Heart left ventricle (tissue), 16 donors: ENCODE measurements at regions of chr14 and their contacts with region 1.

Region 1: GRCh38 chr14:63276492-63277342 is 42.0 kb downstream of the GPHB5 start:
- DNase-seq: no peak
- ATAC-seq: peak in 1 of 4 donors; percentile 32
- H3K4me3 ChIP-seq: no peak overlapping the region
- H3K27ac ChIP-seq: peak overlapping the region in 1 of 12 donors; percentile 17
- H3K4me1 ChIP-seq: peaks cover 0 to 36% (median 7%) of the 10 kb centered on the region in 12 donors
- H3K27me3 ChIP-seq: no peaks in the 10 kb centered on the region
- CTCF ChIP-seq: peak; percentile 57 to 86 (median 83)
- POLR2A ChIP-seq: no peak

Region 2: DNA sequence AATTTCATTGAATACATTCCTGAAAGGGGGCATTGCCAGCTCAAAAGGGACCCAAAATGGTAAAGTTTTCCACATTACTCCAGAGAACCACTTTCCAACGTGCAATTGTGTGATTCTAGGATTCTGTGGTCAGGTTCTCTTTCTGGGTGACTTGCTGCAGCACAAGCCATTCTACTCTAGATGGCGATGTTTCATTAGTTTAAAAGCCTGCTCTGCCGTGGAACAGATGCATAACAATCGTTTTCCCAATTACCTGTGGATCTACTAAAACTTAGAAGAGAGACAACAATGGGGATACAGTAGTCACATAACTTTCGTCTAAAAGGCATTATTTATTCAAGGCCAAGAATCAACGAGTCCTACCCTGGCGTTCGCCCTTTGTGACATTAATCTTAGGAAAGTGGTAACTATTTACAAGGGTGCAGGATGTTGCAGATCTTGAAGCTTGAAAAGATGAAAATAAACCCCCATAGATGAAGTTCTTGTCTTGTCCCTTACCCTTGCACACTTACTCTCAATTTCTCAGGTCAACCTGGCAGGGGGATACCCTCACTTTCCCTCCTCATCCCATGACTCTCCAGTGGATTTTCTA is 1113.6 kb before region 1 on chr14:
- intact Hi-C with region 1: loop called in 5 of 10 experiments (anchors 5 kb)
- DNase-seq: no peak
- ATAC-seq: peak in 2 of 4 donors; percentile 47 to 57
- H3K4me3 ChIP-seq: no peak overlapping the region
- H3K27ac ChIP-seq: no peak overlapping the region
- H3K4me1 ChIP-seq: no peaks in the 10 kb centered on the region
- H3K27me3 ChIP-seq: peaks cover 0 to 33% (median 0%) of the 10 kb centered on the region in 9 donors
- CTCF ChIP-seq: peak; percentile 44 to 76 (median 62)
- POLR2A ChIP-seq: no peak

Region 3: DNA sequence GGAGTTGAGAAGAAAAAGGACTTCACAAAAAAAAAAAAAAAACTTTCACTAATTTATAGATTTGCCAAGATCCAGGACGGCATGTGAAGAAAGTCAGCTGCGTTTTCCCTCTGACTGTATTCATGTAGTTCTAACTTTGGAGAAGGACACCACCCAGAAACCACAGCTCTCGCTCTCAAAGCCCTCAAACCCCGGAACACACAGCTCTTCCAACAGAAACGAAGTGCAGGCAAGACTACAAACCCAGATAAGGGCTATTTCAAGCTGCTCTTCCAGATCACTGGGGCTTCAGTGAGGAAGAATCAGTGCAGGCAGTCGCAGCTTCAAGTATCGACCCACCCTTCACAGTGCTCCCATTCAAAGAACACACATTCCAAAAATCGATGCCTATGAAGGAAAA is 244.6 kb before region 1 on chr14:
- intact Hi-C with region 1: no loop called
- DNase-seq: no peak
- ATAC-seq: no peak
- H3K4me3 ChIP-seq: no peak overlapping the region
- H3K27ac ChIP-seq: no peak overlapping the region
- H3K4me1 ChIP-seq: no peaks in the 10 kb centered on the region
- H3K27me3 ChIP-seq: peaks cover 0 to 17% (median 0%) of the 10 kb centered on the region in 9 donors
- CTCF ChIP-seq: no peak
- POLR2A ChIP-seq: no peak

Region 4: DNA sequence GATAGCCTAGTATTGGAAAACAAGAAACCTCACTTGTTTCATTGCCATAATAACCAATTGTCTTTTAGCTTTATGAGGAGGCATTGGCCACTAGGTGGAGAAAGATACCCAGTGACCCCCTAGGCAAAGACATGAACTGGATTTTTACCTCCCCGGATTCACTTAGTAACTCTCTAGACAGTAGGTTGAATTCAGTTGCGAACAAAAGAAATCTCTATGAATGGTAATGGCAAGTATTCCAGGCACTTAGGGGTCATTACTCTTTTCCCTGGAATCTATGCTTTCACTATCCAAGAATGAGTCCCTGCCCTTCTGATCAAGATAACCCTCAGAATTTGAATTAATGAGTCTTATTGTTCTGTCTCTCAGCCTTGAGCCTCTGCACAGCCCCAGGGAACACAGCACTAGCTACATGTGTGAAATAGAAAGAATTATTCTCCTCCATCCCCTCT is 101.9 kb before region 1 on chr14:
- intact Hi-C with region 1: loop called (anchors 1 to 5 kb)
- DNase-seq: peak in 2 of 5 donors; percentile 24 to 40
- ATAC-seq: peak in 3 of 4 donors; percentile 53 to 77 (median 69)
- H3K4me3 ChIP-seq: no peak overlapping the region
- H3K27ac ChIP-seq: peak overlapping the region in 1 of 12 donors; percentile 18
- H3K4me1 ChIP-seq: peaks cover 0 to 21% (median 5%) of the 10 kb centered on the region in 12 donors
- H3K27me3 ChIP-seq: no peaks in the 10 kb centered on the region
- CTCF ChIP-seq: peak; percentile 44 to 86 (median 70)
- POLR2A ChIP-seq: no peak

Region 5: GRCh38 chr14:63318835-63319234 is 42.1 kb after region 1 on chr14 and contains the start of gene GPHB5:
- intact Hi-C with region 1: no loop called
- DNase-seq: no peak
- ATAC-seq: no peak
- H3K4me3 ChIP-seq: no peak within 1 kb of the TSS
- H3K27ac ChIP-seq: no peak within 1 kb of the TSS
- H3K4me1 ChIP-seq: no peaks in the 10 kb centered on the region
- H3K27me3 ChIP-seq: no peaks in the 10 kb centered on the region
- CTCF ChIP-seq: no peak
- POLR2A ChIP-seq: no peak
- total RNA-seq, gene GPHB5: not detected